ENCODE measurements at regions of chr11 and their contacts with region 1.

Region 1: GRCh38 chr11:12110201-12110713 is at the start of gene MICAL2:
- DNase-seq: peak; percentile 92
- ATAC-seq: peak; percentile 90
- H3K4me3 ChIP-seq: peak within 1 kb of the TSS; percentile 93
- H3K27ac ChIP-seq: peak within 1 kb of the TSS; percentile 54
- H3K4me1 ChIP-seq: peaks cover 26% of the 10 kb centered on the region
- H3K27me3 ChIP-seq: no peaks in the 10 kb centered on the region
- CTCF ChIP-seq: no peak
- total RNA-seq, gene MICAL2: 50.1 and 62.9 TPM in 2 replicates

Region 2: DNA sequence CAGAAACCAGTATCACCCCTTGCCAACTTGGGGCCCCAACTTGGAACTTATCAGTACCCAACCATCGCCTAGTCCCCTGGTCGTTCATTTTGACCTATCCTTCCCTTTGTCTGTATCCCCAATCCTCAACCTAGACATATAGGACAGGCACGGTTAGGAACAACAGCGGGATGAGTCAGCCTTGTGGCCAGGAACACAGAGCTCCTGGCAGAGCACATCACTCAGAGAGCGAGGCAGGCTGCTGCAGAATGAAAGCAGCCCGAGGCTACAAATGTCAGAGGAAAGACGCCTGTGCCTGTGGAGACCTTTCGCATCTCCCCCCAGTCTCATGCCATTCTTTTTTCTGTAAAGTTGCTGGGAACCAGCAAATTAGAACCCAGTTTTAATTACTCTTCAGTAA is 116.4 kb before region 1 on chr11:
- CTCF ChIA-PET with region 1: no interaction called
- POLR2A ChIA-PET with region 1: no interaction called
- intact Hi-C with region 1: no loop called
- DNase-seq: peak; percentile 90
- ATAC-seq: peak; percentile 94
- H3K4me3 ChIP-seq: peak overlapping the region; percentile 33; the same call in 1 of the 2 replicates
- H3K27ac ChIP-seq: peak overlapping the region; percentile 43
- H3K4me1 ChIP-seq: peaks cover 47% of the 10 kb centered on the region
- H3K27me3 ChIP-seq: no peaks in the 10 kb centered on the region
- CTCF ChIP-seq: no peak

Region 3: DNA sequence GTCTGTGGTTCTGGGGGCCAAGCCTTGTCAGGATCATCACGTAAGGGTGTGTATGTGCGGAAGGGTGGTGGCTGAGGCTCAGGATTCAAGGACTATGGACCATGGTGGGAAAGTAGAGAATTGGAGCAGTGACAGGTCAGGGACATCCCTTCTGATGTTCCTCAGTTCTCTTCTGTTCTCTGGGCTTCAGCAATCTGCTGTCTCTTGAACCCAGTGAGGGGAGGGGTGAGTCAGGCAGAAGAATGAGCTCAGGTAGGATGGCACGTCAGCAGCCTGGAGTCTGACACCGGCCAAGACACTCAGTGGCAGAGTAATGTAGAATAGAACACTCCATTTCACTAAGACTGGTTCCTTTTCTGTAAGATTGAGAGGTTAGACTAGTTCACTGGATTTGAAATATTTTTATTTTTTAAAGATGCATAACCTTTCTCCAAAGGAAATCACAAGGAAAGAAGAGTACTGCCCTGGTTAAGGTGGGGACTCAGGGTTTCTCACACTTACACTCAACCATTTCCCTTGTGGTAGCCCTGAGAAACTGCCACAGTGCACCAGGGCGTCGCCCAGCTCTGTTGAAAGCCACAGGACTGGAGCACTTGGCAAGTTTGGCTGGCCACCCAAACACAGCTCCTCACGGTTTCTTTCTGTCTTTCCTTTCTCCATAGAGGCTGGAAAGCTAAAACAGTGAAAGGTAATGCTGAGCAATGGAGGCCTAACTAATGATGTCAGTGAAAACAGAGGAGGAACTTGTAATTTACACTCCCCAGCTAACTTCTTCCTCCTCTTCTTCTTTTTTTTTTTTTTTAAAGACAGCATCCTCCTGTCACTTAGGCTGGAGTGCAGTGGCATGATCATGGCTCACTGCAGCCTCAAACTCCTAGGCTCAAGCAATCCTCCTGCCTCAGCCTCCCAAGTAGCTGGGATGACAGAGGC is 22.9 kb before region 1 on chr11:
- CTCF ChIA-PET with region 1: no interaction called
- POLR2A ChIA-PET with region 1: interaction called, 10 read pairs
- intact Hi-C with region 1: loop called (anchors 2 kb)
- DNase-seq: peak; percentile 74
- ATAC-seq: peak; percentile 16
- H3K4me3 ChIP-seq: peak overlapping the region; percentile 51; the same call in 1 of the 2 replicates
- H3K27ac ChIP-seq: peak overlapping the region; percentile 99
- H3K4me1 ChIP-seq: peaks cover 72% of the 10 kb centered on the region
- H3K27me3 ChIP-seq: no peaks in the 10 kb centered on the region
- CTCF ChIP-seq: 0 out of 2 replicates have a peak, but pooled peaks have one; percentile 11

Region 4: DNA sequence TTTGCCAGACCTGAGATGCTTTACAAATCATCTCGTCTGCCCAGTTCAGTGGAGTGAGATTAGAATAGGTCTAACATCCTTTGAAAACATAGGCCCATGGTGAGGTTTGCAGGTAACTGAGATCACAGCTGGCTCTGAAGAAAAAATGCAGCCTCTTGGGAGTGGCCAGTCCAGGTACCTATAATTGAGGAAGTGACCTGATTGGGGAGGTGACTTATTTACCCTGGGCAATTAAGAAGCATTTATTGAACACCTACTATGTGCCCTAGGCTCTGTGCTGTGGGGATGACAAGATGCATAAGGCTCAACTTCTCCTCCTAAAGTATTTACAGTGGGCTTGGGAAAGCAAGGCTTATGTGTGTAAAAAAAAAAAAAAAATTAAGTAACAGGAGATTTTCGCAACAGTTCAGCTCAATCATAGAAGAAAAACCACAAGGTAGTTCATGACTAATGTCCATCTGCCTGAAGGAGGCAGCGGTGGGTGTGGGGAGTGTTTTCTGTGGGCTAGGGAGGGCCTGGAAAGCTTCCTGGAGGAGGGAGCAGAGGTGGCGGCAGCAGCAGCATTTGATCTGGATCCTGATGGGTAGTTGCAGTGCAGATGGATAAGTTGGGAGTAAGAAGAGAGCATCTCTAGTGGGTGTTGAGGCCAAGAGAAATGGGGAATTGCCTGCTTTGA is 16.2 kb after region 1 on chr11:
- CTCF ChIA-PET with region 1: no interaction called
- POLR2A ChIA-PET with region 1: interaction called, 12 read pairs
- intact Hi-C with region 1: no loop called
- DNase-seq: peak; percentile 65
- ATAC-seq: peak; percentile 10
- H3K4me3 ChIP-seq: peak overlapping the region; percentile 14; the same call in 1 of the 2 replicates
- H3K27ac ChIP-seq: peak overlapping the region; percentile 84
- H3K4me1 ChIP-seq: peaks cover 57% of the 10 kb centered on the region
- H3K27me3 ChIP-seq: no peaks in the 10 kb centered on the region
- CTCF ChIP-seq: no peak

Region 5: GRCh38 chr11:12159351-12160099 is 49.3 kb after region 1 on chr11:
- CTCF ChIA-PET with region 1: no interaction called
- POLR2A ChIA-PET with region 1: interaction called, 5 read pairs
- intact Hi-C with region 1: loop called (anchors 5 kb)
- DNase-seq: peak; percentile 69
- ATAC-seq: peak; percentile 69
- H3K4me3 ChIP-seq: no peak overlapping the region
- H3K27ac ChIP-seq: peak overlapping the region; percentile 48
- H3K4me1 ChIP-seq: peaks cover 43% of the 10 kb centered on the region
- H3K27me3 ChIP-seq: no peaks in the 10 kb centered on the region
- CTCF ChIP-seq: peak; percentile 32; the same call in 1 of the 2 replicates